Esophagus muscularis mucosa (tissue), 4 donors: ENCODE measurements at regions of chr17 and their contacts with region 1.

Region 1: DNA sequence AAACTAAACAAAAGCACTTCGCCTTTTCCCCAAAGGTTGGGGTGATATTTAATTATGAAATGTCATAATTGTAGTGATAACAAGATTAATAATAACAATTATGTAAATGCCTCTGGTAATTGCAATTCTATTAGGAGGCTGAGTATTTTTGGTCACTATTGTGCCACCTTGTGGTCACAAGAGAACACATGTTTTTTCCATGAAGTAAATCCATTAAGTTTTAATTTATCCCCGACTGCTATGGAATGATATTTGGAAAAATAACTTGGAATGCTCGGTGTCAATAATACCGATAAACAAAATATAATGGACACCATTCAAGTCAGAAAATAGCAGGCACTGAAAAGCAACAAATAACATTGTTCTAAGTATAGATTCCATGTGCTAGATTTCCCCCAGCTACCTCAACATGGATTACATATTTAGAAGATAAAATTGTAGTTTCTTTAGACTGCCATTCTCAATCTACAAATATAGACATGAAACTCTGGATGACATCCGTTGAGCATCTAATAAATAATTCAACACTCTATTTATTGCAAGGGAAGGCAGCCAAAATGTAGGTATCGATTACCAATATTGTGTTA is 25.0 kb upstream of the KCNJ2 start:
- DNase-seq: no peak
- H3K4me3 ChIP-seq: no peak overlapping the region
- H3K27ac ChIP-seq: no peak overlapping the region
- H3K4me1 ChIP-seq: peaks cover 0 to 11% (median 5%) of the 10 kb centered on the region in 4 donors
- H3K27me3 ChIP-seq: no peaks in the 10 kb centered on the region
- CTCF ChIP-seq: peak; percentile 70 to 75 (median 75)
- EP300 ChIP-seq: no peak
- POLR2A ChIP-seq: no peak

Region 2: GRCh38 chr17:69574257-69575197 is 569.8 kb before region 1 on chr17:
- intact Hi-C with region 1: loop called (anchors 2 kb)
- DNase-seq: no peak
- H3K4me3 ChIP-seq: no peak overlapping the region
- H3K27ac ChIP-seq: peak overlapping the region; percentile 46 to 69 (median 65)
- H3K4me1 ChIP-seq: peaks cover 19 to 40% (median 32%) of the 10 kb centered on the region in 4 donors
- H3K27me3 ChIP-seq: no peaks in the 10 kb centered on the region
- CTCF ChIP-seq: no peak
- EP300 ChIP-seq: no peak
- POLR2A ChIP-seq: no peak

Region 3: DNA sequence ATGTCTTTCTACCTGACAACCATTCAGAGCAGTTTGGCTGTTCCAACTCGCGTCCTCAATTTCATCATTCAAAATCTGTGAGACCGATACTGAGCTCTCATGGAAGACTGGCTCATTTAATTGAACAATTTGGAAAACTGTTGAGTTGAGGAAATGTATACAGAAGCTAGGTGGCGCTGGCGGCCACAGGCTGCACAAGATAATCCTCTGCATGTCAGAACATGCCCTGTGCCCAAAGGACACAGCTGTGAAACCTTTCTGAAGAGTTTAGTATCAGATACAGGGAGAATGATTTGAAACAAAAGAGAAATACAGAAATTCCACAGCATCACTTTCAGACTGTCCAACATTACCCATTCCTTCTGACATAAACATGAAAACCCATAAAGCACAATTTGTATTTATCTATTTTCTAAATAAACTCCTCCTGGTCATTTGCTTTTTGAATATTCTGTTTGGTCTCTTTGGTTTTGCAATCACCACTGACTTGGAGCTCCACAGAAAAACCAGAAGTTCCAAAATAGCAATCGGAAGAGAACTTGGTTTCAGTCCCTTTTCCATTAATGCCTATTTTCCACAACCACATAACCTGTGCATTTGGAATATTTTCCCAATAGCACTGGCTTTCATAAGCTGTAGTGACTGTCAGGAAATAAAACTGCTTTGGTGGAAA is 537.1 kb before region 1 on chr17:
- intact Hi-C with region 1: loop called (anchors 2 kb)
- DNase-seq: no peak
- H3K4me3 ChIP-seq: no peak overlapping the region
- H3K27ac ChIP-seq: peak overlapping the region; percentile 34 to 75 (median 59)
- H3K4me1 ChIP-seq: peaks cover 33 to 40% (median 34%) of the 10 kb centered on the region in 4 donors
- H3K27me3 ChIP-seq: no peaks in the 10 kb centered on the region
- CTCF ChIP-seq: peak; percentile 78 to 84 (median 79)
- EP300 ChIP-seq: no peak
- POLR2A ChIP-seq: no peak

Region 4: GRCh38 chr17:69761751-69762321 is 382.5 kb before region 1 on chr17:
- intact Hi-C with region 1: loop called (anchors 10 kb)
- DNase-seq: no peak
- H3K4me3 ChIP-seq: no peak overlapping the region
- H3K27ac ChIP-seq: peak overlapping the region; percentile 6 to 51 (median 42)
- H3K4me1 ChIP-seq: peaks cover 3 to 34% (median 17%) of the 10 kb centered on the region in 4 donors
- H3K27me3 ChIP-seq: no peaks in the 10 kb centered on the region
- CTCF ChIP-seq: no peak
- EP300 ChIP-seq: no peak
- POLR2A ChIP-seq: no peak